ENCODE measurements at regions of chr2 and their contacts with region 1.

Region 1: DNA sequence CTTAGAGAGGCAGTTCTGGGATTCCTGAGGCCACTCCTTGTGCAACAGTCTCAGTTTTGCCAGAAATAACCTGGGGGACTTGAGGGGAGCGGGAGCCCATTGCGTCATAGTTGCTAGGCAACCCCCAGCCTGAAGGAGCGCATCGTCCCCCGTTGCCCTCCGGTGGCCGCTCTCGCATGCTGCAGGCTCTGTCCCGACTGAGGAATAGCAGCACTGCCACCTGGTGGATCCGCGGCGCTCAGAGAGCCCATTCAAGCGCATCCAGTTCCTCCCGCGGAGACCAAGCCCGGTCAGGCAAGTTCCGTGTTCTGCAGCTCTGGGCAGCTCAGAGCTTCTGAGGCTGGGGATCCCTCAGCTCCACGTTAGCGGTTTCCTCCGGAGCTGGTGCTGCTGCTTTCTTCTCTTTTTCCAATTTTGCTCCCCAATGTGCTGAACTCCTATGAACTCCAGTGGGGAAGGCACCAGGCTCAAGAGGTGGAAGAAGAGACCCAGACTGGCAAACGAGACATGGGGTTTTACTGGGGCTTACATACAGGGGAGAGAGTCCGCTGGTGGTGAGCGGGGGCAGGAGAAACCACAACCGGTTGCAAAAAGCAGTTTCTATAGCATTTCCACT is 15.1 kb downstream of the SLC4A3 start:
- DNase-seq: peak; percentile 96
- H3K4me3 ChIP-seq: no peak overlapping the region
- H3K4me3 Mint-ChIP-seq: no peak overlapping the region
- H3K27ac Mint-ChIP-seq: peak overlapping the region; percentile 62
- H3K4me1 ChIP-seq: peaks cover 35% of the 10 kb centered on the region
- H3K4me1 Mint-ChIP-seq: peaks cover 19% of the 10 kb centered on the region
- H3K27me3 ChIP-seq: no peaks in the 10 kb centered on the region
- H3K27me3 Mint-ChIP-seq: no peaks in the 10 kb centered on the region
- CTCF ChIP-seq: peak; percentile 99 to 100

Region 2: DNA sequence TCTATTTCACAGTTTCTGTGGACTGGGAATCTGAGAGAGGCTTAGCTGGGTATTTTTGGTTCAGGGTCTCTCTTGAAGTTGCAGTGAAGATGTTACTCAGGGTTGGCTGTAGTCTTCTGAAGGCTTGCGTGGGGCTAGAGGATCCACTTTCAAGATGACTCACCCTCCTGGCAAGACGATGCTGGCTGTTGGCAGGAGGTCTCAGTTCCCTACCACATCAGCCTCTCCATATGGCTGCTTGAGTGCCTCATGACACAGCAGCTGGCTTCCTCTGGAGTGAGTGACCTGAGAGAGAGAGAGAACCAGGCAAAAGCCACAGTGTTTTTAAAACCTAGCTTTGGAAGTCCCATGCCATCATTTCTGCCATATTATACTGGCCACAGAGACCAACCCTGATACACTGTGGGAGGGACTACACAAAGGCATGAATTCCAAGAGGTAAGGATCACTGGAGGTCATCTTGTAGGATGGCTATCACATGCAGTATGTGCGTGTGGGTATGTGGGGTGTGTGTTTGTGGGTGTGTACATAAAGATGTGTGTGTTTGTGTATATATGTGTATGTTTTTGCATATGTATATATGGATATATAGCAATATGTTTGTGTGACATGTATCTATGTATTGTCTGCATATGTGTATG is 279.9 kb before region 1 on chr2:
- CTCF ChIA-PET with region 1: no interaction called
- POLR2A ChIA-PET with region 1: no interaction called
- intact Hi-C with region 1: no loop called
- DNase-seq: no peak
- H3K4me3 ChIP-seq: no peak overlapping the region
- H3K4me3 Mint-ChIP-seq: no peak overlapping the region
- H3K27ac Mint-ChIP-seq: no peak overlapping the region
- H3K4me1 ChIP-seq: no peaks in the 10 kb centered on the region
- H3K4me1 Mint-ChIP-seq: no peaks in the 10 kb centered on the region
- H3K27me3 ChIP-seq: no peaks in the 10 kb centered on the region; the same call in 1 of the 2 replicates
- H3K27me3 Mint-ChIP-seq: peaks cover 2% of the 10 kb centered on the region
- CTCF ChIP-seq: no peak

Region 3: GRCh38 chr2:219475697-219476651 is 166.6 kb before region 1 on chr2:
- CTCF ChIA-PET with region 1: no interaction called
- POLR2A ChIA-PET with region 1: no interaction called
- intact Hi-C with region 1: no loop called
- DNase-seq: peak; percentile 74 to 87
- H3K4me3 ChIP-seq: no peak overlapping the region
- H3K4me3 Mint-ChIP-seq: peak overlapping the region; percentile 10
- H3K27ac Mint-ChIP-seq: no peak overlapping the region
- H3K4me1 ChIP-seq: no peaks in the 10 kb centered on the region
- H3K4me1 Mint-ChIP-seq: no peaks in the 10 kb centered on the region
- H3K27me3 ChIP-seq: no peaks in the 10 kb centered on the region
- H3K27me3 Mint-ChIP-seq: no peaks in the 10 kb centered on the region
- CTCF ChIP-seq: peak; percentile 91 to 94

Region 4: GRCh38 chr2:219543601-219544358 is 98.8 kb before region 1 on chr2 and contains the starts of genes CHPF and TMEM198:
- CTCF ChIA-PET with region 1: interaction called, 3 read pairs
- POLR2A ChIA-PET with region 1: interaction called, 3 read pairs
- intact Hi-C with region 1: loop called (anchors 1 kb)
- DNase-seq: peak; percentile 99
- H3K4me3 ChIP-seq: peak within 1 kb of the TSS; percentile 92
- H3K4me3 Mint-ChIP-seq: peak within 1 kb of the TSS; percentile 92
- H3K27ac Mint-ChIP-seq: peak within 1 kb of the TSS; percentile 87
- H3K4me1 ChIP-seq: peaks cover 19% of the 10 kb centered on the region
- H3K4me1 Mint-ChIP-seq: peaks cover 7% of the 10 kb centered on the region
- H3K27me3 ChIP-seq: no peaks in the 10 kb centered on the region
- H3K27me3 Mint-ChIP-seq: no peaks in the 10 kb centered on the region
- CTCF ChIP-seq: no peak
- total RNA-seq, gene CHPF: 26.4 and 27.3 TPM in 2 replicates
- total RNA-seq, gene TMEM198: 8.5 and 9.1 TPM in 2 replicates

Region 5: DNA sequence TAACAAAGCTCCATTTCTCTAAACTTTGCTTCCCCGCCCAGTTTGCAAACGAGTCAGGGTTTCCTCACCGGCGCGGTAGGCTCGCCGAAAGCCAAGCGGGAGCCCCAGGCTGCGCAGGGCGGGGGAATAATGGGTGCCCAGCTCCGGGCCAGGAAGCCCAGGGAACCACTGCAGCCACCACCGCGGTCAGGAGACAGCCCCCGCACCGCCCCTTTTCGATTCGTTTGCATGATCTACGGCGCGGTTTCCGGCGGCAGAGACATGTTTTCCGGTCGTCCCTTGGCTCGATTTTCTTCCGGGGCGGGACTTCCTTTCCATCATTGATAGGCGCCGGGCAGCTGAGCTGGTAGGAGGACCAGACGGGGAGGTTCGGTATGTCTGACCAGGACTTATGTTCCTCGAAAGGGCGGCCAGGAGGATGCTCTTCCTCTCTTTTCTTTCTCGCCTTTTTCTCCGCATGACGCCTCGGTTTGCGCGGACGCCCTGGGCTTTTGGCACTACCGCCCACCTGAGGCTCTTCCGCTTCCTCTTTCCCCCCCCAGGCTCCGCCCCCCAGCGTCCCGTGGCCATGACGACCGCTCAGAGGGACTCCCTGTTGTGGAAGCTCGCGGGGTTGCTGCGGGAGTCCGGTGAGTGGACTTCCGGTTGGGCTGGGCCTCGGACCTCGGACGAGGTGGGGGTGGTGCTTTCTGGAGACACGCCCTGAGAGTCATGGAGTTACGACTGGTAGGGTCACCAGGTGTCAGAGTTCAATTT is 44.8 kb before region 1 on chr2 and contains the start of gene STK11IP:
- CTCF ChIA-PET with region 1: interaction called, 11 read pairs
- POLR2A ChIA-PET with region 1: no interaction called
- intact Hi-C with region 1: loop called (anchors 1 kb)
- DNase-seq: peak; percentile 97 to 99
- H3K4me3 ChIP-seq: peak within 1 kb of the TSS; percentile 72
- H3K4me3 Mint-ChIP-seq: peak within 1 kb of the TSS; percentile 96
- H3K27ac Mint-ChIP-seq: peak within 1 kb of the TSS; percentile 98
- H3K4me1 ChIP-seq: peaks cover 23% of the 10 kb centered on the region
- H3K4me1 Mint-ChIP-seq: no peaks in the 10 kb centered on the region
- H3K27me3 ChIP-seq: no peaks in the 10 kb centered on the region
- H3K27me3 Mint-ChIP-seq: no peaks in the 10 kb centered on the region
- CTCF ChIP-seq: no peak
- total RNA-seq, gene STK11IP: 21.7 and 24.3 TPM in 2 replicates

Region 6: DNA sequence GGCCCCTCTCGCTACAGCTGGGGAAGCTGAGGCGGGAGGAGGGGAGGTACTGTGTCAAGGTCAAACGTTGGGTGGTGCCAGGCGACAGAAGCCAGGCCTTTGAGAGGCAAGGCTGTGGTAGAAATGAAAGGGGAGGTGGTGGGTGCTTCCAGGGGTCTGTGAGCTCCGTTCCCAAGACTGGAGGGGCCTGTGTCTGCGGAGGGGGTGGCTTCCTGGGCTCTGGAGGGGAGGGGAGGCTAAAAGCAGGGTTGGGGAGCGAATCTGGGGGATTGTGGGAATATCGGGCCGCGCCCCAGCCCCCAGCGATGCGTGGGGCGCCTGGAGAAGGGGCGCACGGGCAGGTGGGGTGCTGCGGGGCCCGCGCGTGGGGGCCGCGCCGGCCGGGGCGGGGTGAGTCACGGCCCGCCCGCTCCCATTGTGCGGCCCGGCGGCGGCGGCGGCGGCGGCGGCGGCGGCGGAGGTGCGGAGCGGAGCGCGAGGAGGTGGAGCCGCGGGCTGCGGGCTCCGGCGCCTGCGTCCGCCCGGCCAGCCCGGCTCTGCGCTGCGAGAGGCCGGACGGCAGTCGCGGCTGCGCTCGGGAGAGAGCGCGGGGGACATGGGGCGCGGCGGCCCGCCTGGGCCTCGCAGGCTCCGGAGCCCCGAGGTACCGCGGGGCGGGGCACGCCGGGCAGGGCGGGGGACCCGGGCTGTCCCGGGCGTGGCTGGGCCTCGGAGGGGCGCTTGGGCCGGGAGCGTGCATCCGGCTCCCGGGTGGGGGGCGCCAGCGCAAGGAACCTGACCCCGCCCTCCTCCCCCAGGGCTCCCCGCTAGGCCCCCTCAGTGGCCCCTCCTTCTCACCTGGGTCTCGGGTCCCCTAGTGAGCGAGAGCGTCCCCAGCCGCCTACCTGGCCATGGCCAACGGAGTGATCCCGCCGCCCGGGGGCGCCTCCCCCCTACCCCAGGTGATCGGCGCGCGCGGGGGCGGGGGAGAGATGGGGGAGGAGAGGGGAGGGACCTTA is 15.2 kb before region 1 on chr2 and contains the start of gene SLC4A3:
- CTCF ChIA-PET with region 1: no interaction called
- POLR2A ChIA-PET with region 1: no interaction called
- intact Hi-C with region 1: loop called (anchors 1 kb)
- DNase-seq: peak; percentile 53 to 58
- H3K4me3 ChIP-seq: peak within 1 kb of the TSS; percentile 58
- H3K4me3 Mint-ChIP-seq: peak within 1 kb of the TSS; percentile 80
- H3K27ac Mint-ChIP-seq: peak within 1 kb of the TSS; percentile 39
- H3K4me1 ChIP-seq: no peaks in the 10 kb centered on the region
- H3K4me1 Mint-ChIP-seq: no peaks in the 10 kb centered on the region
- H3K27me3 ChIP-seq: no peaks in the 10 kb centered on the region
- H3K27me3 Mint-ChIP-seq: no peaks in the 10 kb centered on the region
- CTCF ChIP-seq: peak in 1 of 2 experiments; percentile 38
- total RNA-seq, gene SLC4A3: 6.1 and 6.2 TPM in 2 replicates

Region 7: GRCh38 chr2:219689676-219690628 is 47.4 kb after region 1 on chr2:
- CTCF ChIA-PET with region 1: interaction called, 5 read pairs
- POLR2A ChIA-PET with region 1: no interaction called
- intact Hi-C with region 1: loop called (anchors 1 kb)
- DNase-seq: peak in 1 of 2 experiments; percentile 71
- H3K4me3 ChIP-seq: no peak overlapping the region
- H3K4me3 Mint-ChIP-seq: no peak overlapping the region
- H3K27ac Mint-ChIP-seq: no peak overlapping the region
- H3K4me1 ChIP-seq: peaks cover 48% of the 10 kb centered on the region
- H3K4me1 Mint-ChIP-seq: peaks cover 21% of the 10 kb centered on the region
- H3K27me3 ChIP-seq: no peaks in the 10 kb centered on the region
- H3K27me3 Mint-ChIP-seq: peaks cover 7% of the 10 kb centered on the region
- CTCF ChIP-seq: peak; percentile 66 to 86

Region 8: GRCh38 chr2:219812672-219813071 is 170.1 kb after region 1 on chr2:
- CTCF ChIA-PET with region 1: no interaction called
- POLR2A ChIA-PET with region 1: no interaction called
- intact Hi-C with region 1: no loop called
- DNase-seq: no peak
- H3K4me3 ChIP-seq: no peak overlapping the region
- H3K4me3 Mint-ChIP-seq: no peak overlapping the region
- H3K27ac Mint-ChIP-seq: no peak overlapping the region
- H3K4me1 ChIP-seq: no peaks in the 10 kb centered on the region
- H3K4me1 Mint-ChIP-seq: no peaks in the 10 kb centered on the region
- H3K27me3 ChIP-seq: no peaks in the 10 kb centered on the region
- H3K27me3 Mint-ChIP-seq: peaks cover 7% of the 10 kb centered on the region
- CTCF ChIP-seq: no peak

Measured in Caco-2 (cell line).